ENCODE measurements at regions of chr16 and their contacts with region 1.

Region 1: DNA sequence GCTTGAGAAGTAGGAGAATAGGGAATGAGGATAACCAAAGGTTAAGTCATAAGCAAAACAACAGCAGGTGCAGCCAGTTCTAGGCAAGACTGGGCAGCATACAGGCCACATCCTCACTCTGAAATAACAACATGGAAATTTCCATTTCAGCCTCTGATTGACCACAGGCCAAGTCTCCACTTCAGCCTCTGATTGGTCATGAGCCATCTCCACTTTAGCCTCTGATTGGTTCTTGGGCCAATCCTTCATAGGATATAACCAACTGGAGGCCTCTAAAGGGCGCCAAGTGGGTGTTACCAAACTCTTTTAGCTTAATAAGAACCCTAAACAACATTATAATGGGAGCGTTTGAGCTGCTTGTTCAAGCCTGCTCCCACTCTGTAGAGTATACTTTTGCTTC is 512.0 kb downstream of the NPIPA7 start:
- DNase-seq: no peak
- H3K4me3 ChIP-seq: no peak overlapping the region
- H3K4me1 ChIP-seq: no peaks in the 10 kb centered on the region
- H3K27me3 ChIP-seq: no peaks in the 10 kb centered on the region

Region 2: DNA sequence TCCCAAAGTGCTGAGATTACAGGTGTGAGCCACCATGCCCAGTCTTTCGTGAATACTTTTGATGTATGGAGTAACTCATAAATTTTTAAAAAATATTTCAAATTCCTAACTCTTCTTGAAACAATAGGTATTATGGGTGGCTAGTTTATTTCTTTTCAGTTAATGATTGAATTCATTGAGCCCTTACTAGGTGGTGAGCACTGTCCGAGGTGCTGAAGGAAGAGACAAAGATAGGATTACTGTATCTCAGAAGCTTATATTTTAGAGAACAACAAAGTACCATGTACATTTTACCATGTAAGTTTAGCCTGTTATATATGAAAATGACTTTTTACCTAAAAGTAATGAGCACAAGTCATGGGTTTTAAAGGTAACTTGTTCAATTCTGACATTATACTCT is 93.7 kb before region 1 on chr16:
- in situ Hi-C with region 1: loop called (anchors 25 kb)
- DNase-seq: no peak
- H3K4me3 ChIP-seq: no peak overlapping the region
- H3K4me1 ChIP-seq: no peaks in the 10 kb centered on the region
- H3K27me3 ChIP-seq: no peaks in the 10 kb centered on the region

Measured in HAP-1 (cell line).